ENCODE measurements at regions of chr3 and their contacts with region 1.

Region 1: GRCh38 chr3:97821810-97822775 is at the start of gene CRYBG3:
- DNase-seq: peak; percentile 83 to 90
- ATAC-seq: peak; percentile 96 to 99 (median 98)
- H3K4me3 ChIP-seq: peak within 1 kb of the TSS; percentile 69 to 94 (median 84)
- H3K27ac ChIP-seq: peak within 1 kb of the TSS; percentile 72 to 95 (median 92)
- H3K4me1 ChIP-seq: peaks cover 3 to 41% (median 34%) of the 10 kb centered on the region in 9 donors
- H3K27me3 ChIP-seq: peaks cover 0 to 7% (median 0%) of the 10 kb centered on the region in 7 donors
- CTCF ChIP-seq: peak in 8 of 9 donors; percentile 12 to 63 (median 24)
- total RNA-seq, gene CRYBG3: 15.9 to 39.2 (median 28.7) TPM

Region 2: GRCh38 chr3:97871801-97872524 is 49.9 kb after region 1 on chr3:
- intact Hi-C with region 1: loop called in 1 of 10 experiments (anchors 10 kb)
- DNase-seq: no peak
- ATAC-seq: peak in 7 of 8 donors; percentile 12 to 70 (median 49)
- H3K4me3 ChIP-seq: no peak overlapping the region
- H3K27ac ChIP-seq: peak overlapping the region in 3 of 10 donors; percentile 17 to 28 (median 20)
- H3K4me1 ChIP-seq: peaks cover 0 to 14% (median 0%) of the 10 kb centered on the region in 9 donors
- H3K27me3 ChIP-seq: no peaks in the 10 kb centered on the region
- CTCF ChIP-seq: no peak

Region 3: GRCh38 chr3:97895216-97895615 is 73.1 kb after region 1 on chr3:
- intact Hi-C with region 1: loop called in 2 of 10 experiments (anchors 5 kb)
- DNase-seq: no peak
- ATAC-seq: no peak
- H3K4me3 ChIP-seq: no peak overlapping the region
- H3K27ac ChIP-seq: no peak overlapping the region
- H3K4me1 ChIP-seq: peaks cover 0 to 8% (median 0%) of the 10 kb centered on the region in 9 donors
- H3K27me3 ChIP-seq: no peaks in the 10 kb centered on the region
- CTCF ChIP-seq: no peak

Region 4: GRCh38 chr3:97971677-97972567 is 149.8 kb after region 1 on chr3 and contains the start of gene RIOX2:
- intact Hi-C with region 1: loop called in 3 of 10 experiments (anchors 5 to 10 kb)
- DNase-seq: peak; percentile 57 to 81
- ATAC-seq: peak; percentile 91 to 99 (median 95)
- H3K4me3 ChIP-seq: peak within 1 kb of the TSS; percentile 63 to 83 (median 76)
- H3K27ac ChIP-seq: peak within 1 kb of the TSS in 9 of 10 donors; percentile 73 to 88 (median 81)
- H3K4me1 ChIP-seq: peaks cover 0 to 33% (median 12%) of the 10 kb centered on the region in 9 donors
- H3K27me3 ChIP-seq: no peaks in the 10 kb centered on the region
- CTCF ChIP-seq: peak in 4 of 9 donors; percentile 25 to 36 (median 32)
- total RNA-seq, gene RIOX2: 9.1 to 15.8 (median 12.8) TPM